CD8-positive, alpha-beta T cell (primary cell): ENCODE measurements at regions of chr17 and their contacts with region 1.

Region 1: DNA sequence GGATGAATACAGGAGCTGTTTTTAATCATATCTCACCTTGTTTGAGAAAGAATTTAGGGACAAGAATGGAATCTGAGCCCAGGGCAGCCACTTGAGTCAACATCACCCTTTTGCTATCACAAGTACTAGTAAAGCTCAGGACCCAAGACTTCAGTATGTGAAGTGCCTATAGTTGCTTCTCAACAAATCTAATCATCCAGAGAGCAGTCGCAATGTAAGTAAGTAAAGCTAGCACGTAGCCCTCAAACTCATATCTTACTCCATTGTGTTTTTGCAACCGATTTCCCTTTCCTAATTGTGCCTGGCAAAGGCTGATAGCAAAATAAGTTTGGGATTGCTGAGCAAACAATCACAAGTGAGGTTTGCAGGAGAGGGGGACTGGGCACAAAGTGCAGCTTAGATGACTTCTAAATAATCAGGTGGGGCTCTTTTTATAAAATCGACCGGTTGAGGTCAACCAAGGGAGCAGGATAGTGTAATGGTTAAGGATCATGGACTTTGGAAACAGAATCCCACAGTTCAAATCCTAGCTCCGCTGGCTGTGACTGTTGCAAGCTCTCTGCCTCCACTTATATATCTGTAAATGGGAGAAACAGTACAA is 13.0 kb downstream of the TOB1 start:
- DNase-seq: peak in 2 of 9 experiments; percentile 6 to 25
- ATAC-seq: no peak
- H3K4me3 ChIP-seq: no peak overlapping the region
- H3K4me3 Mint-ChIP-seq: peak overlapping the region; percentile 77
- H3K27ac ChIP-seq: no peak overlapping the region
- H3K27ac Mint-ChIP-seq: peak overlapping the region; percentile 91
- H3K4me1 ChIP-seq: peaks cover 9% of the 10 kb centered on the region
- H3K4me1 Mint-ChIP-seq: peaks cover 15% of the 10 kb centered on the region
- H3K27me3 ChIP-seq: no peaks in the 10 kb centered on the region
- H3K27me3 Mint-ChIP-seq: no peaks in the 10 kb centered on the region
- CTCF ChIP-seq: no peak

Region 2: GRCh38 chr17:50816771-50817751 is 36.1 kb before region 1 on chr17:
- CTCF ChIA-PET with region 1: interaction called, 16 read pairs
- POLR2A ChIA-PET with region 1: no interaction called
- intact Hi-C with region 1: no loop called
- DNase-seq: peak; percentile 32 to 78 (median 60)
- ATAC-seq: peak; percentile 52
- H3K4me3 ChIP-seq: no peak overlapping the region
- H3K4me3 Mint-ChIP-seq: no peak overlapping the region
- H3K27ac ChIP-seq: no peak overlapping the region
- H3K27ac Mint-ChIP-seq: no peak overlapping the region
- H3K4me1 ChIP-seq: no peaks in the 10 kb centered on the region
- H3K4me1 Mint-ChIP-seq: no peaks in the 10 kb centered on the region
- H3K27me3 ChIP-seq: peaks cover 0 to 2% of the 10 kb centered on the region in 2 experiments
- H3K27me3 Mint-ChIP-seq: peaks cover 17% of the 10 kb centered on the region
- CTCF ChIP-seq: peak; percentile 75

Region 3: DNA sequence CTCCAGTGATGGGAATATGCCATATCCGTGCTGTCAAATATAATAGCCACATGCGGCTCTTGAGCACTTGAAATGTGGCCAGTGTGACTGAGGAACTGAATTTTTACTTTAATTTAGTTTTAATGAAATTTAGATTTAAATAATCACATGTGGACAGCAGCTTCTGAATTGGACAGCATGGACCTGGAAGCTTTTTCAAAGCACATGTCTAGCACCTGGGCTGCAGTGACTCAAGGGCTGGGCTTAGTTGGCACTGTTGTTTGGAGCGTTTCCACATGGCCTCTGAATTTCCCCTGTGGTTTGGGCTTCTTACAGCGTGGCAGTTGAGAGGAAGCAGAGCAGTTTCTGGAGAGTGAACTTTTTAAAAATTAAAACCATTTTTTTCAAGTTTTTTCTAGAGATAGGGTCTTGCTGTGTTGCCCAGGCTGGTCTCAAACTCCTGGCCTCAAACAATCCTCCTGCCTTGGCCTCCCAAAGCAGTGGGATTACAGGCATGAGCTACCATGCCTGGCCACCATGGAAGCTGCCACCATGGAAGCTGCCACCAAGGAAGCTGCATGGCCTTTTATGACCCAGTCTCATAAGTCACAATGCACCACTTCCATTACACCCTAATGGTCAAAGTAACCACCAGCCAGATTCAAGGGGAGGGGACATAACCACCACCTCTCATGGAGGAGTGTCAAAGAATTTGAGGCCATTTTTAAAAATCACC is 19.8 kb after region 1 on chr17:
- CTCF ChIA-PET with region 1: interaction called, 21 read pairs
- POLR2A ChIA-PET with region 1: interaction called, 67 read pairs
- intact Hi-C with region 1: no loop called
- DNase-seq: peak in 7 of 9 experiments; percentile 36 to 84 (median 59)
- ATAC-seq: peak; percentile 63
- H3K4me3 ChIP-seq: no peak overlapping the region
- H3K4me3 Mint-ChIP-seq: no peak overlapping the region
- H3K27ac ChIP-seq: no peak overlapping the region
- H3K27ac Mint-ChIP-seq: no peak overlapping the region
- H3K4me1 ChIP-seq: peaks cover 44% of the 10 kb centered on the region
- H3K4me1 Mint-ChIP-seq: peaks cover 40% of the 10 kb centered on the region
- H3K27me3 ChIP-seq: no peaks in the 10 kb centered on the region
- H3K27me3 Mint-ChIP-seq: no peaks in the 10 kb centered on the region
- CTCF ChIP-seq: no peak

Region 4: DNA sequence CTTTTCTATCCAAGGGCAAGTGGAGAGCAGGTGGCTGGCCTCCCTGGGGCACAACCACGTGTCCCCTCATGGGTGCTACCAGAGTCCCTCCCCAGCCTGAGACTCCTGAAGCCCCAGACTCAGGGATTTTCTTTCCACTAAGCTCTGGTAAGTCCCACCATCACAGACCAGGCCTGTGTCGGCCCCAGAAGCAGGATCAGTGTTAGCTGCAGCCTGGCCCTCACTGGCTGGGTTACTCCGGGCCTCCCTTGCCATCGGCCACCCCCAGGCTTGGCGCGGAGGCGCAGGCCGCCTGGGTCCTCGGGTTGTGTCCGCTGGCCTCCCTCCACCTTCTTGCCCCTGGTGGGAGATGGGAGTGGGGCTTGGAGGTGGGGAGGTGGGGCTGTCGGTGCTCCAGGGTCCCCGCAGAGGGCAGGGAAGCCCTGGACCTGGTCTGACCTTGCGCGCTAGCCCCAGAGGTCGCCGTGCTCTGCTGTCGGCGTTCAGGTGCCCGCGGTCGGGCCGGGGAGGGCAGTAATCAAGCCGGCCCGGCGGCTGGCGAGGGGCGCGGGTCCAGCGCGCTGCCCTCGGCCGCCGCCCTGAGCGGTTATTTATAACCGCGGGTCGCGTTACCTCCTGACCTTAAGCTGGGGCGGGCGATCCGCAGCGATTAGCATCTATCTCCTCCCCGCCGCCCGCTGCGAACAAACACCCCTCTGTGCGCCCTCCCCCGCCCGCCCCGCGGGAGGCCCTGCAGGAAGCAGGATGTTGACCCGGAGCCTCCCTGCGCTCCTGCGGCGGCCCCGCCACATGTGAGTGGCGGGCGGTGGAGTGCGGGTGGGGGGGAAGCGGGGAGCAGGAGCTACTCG is 91.2 kb after region 1 on chr17:
- CTCF ChIA-PET with region 1: interaction called, 761 read pairs
- POLR2A ChIA-PET with region 1: interaction called, 15 read pairs
- intact Hi-C with region 1: no loop called
- DNase-seq: peak; percentile 57 to 92 (median 78)
- ATAC-seq: peak; percentile 89
- H3K4me3 ChIP-seq: peak overlapping the region; percentile 60 to 66
- H3K4me3 Mint-ChIP-seq: peak overlapping the region; percentile 76
- H3K27ac ChIP-seq: peak overlapping the region; percentile 72 to 76
- H3K27ac Mint-ChIP-seq: peak overlapping the region; percentile 90
- H3K4me1 ChIP-seq: peaks cover 41% of the 10 kb centered on the region
- H3K4me1 Mint-ChIP-seq: peaks cover 37% of the 10 kb centered on the region
- H3K27me3 ChIP-seq: no peaks in the 10 kb centered on the region
- H3K27me3 Mint-ChIP-seq: no peaks in the 10 kb centered on the region
- CTCF ChIP-seq: no peak

Region 5: GRCh38 chr17:50967795-50968194 is 114.7 kb after region 1 on chr17:
- CTCF ChIA-PET with region 1: interaction called, 42 read pairs
- POLR2A ChIA-PET with region 1: interaction called, 3 read pairs
- intact Hi-C with region 1: no loop called
- DNase-seq: no peak
- ATAC-seq: no peak
- H3K4me3 ChIP-seq: no peak overlapping the region
- H3K4me3 Mint-ChIP-seq: no peak overlapping the region
- H3K27ac ChIP-seq: no peak overlapping the region
- H3K27ac Mint-ChIP-seq: no peak overlapping the region
- H3K4me1 ChIP-seq: no peaks in the 10 kb centered on the region
- H3K4me1 Mint-ChIP-seq: peaks cover 4% of the 10 kb centered on the region
- H3K27me3 ChIP-seq: no peaks in the 10 kb centered on the region
- H3K27me3 Mint-ChIP-seq: no peaks in the 10 kb centered on the region
- CTCF ChIP-seq: no peak